AG04449 (cell line): ENCODE measurements at regions of chr11 and their contacts with region 1.

Region 1: DNA sequence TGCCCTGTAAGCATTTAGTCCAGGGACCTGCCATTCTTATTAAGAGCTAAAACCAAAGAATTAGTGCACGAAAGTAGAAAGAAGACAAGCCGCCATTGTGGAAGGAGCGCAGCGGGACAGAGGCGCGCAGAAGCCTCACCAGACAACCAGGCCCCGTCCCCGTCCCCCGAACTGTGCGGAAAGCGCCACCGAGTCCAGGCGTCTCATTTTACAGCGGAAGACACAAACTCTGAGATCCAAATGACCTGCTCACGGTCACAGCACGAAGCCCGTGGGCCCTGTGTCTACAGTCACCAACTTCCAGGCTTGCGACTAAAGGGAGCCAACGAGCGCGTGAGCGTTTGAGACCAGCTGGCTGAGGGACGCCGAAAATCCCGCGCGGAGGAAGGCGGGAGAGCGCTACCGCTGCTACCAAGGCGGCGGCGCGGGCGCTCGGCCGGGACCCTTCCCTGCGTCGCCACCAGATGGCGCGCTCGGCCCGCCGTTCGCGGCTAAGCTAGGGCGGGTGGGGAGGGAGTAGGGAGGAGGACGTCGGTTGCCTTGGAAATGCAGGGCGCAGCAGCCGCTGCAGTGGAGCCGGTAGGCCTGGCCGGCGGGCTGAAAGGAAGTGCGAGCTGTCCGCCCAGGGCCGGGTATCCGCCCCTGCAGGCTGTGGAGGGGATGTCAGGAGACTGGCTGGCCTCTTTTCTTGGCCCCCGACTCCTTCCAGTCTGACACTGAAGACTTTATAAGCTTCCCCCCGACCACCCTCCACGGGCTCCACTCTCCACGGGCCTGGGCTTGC is 434 bp upstream of the CCDC83 start:
- DNase-seq: no peak
- H3K4me3 ChIP-seq: peak overlapping the region; percentile 70
- CTCF ChIP-seq: peak; percentile 72

Region 2: GRCh38 chr11:85472953-85473352 is 381.8 kb before region 1 on chr11:
- CTCF ChIA-PET with region 1: no interaction called
- POLR2A ChIA-PET with region 1: no interaction called
- DNase-seq: no peak
- H3K4me3 ChIP-seq: no peak overlapping the region
- CTCF ChIP-seq: no peak

Region 3: DNA sequence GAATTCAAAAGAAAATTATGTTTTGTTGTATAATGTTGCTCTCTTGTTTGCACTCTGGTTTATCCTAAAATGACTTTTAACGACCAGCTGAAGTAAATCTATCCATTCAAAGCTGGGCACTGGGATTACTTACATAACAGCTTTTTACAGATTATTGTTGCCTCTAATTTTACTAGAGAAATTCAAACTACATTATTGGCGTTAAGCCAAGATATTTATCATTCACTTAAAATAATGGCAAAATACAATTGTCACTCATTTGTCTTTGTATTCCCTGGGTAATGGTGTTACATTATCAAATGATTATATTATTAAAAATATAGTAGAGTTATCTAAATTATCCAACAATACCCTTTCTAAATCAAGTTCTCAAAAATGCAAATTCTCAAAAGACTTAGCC is 257.9 kb before region 1 on chr11:
- CTCF ChIA-PET with region 1: interaction called, 10 read pairs
- POLR2A ChIA-PET with region 1: no interaction called
- DNase-seq: no peak
- H3K4me3 ChIP-seq: no peak overlapping the region
- CTCF ChIP-seq: no peak

Region 4: GRCh38 chr11:85826116-85826855 is 28.5 kb before region 1 on chr11:
- CTCF ChIA-PET with region 1: interaction called, 11 read pairs
- POLR2A ChIA-PET with region 1: no interaction called
- DNase-seq: no peak
- H3K4me3 ChIP-seq: no peak overlapping the region
- CTCF ChIP-seq: peak; percentile 80

Region 5: DNA sequence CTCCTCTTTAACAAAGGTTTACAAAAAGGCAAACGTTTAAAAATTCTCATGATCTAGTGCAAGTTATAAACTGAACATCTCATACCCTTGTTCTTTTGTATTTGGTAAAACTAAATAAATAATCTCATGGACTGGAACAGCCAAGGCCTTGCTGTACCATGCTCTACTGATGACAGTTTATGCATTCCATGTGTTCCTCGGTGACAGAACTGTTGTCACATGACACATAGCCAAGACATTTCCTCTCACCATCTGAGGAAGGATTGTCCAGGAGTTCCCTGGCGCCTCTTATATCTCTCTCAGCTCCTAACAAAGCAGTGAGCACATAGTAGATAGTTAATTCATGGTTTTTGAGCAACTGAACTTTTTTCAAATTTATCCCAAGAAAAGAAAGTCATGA is 13.0 kb after region 1 on chr11:
- CTCF ChIA-PET with region 1: interaction called, 73 read pairs
- POLR2A ChIA-PET with region 1: no interaction called
- DNase-seq: no peak
- H3K4me3 ChIP-seq: no peak overlapping the region
- CTCF ChIP-seq: no peak

Region 6: GRCh38 chr11:86218125-86219084 is 363.7 kb after region 1 on chr11:
- CTCF ChIA-PET with region 1: interaction called, 16 read pairs
- POLR2A ChIA-PET with region 1: interaction called, 3 read pairs
- DNase-seq: no peak
- H3K4me3 ChIP-seq: peak overlapping the region; percentile 2; the same call in 1 of the 2 replicates
- CTCF ChIP-seq: peak; percentile 83

Region 7: DNA sequence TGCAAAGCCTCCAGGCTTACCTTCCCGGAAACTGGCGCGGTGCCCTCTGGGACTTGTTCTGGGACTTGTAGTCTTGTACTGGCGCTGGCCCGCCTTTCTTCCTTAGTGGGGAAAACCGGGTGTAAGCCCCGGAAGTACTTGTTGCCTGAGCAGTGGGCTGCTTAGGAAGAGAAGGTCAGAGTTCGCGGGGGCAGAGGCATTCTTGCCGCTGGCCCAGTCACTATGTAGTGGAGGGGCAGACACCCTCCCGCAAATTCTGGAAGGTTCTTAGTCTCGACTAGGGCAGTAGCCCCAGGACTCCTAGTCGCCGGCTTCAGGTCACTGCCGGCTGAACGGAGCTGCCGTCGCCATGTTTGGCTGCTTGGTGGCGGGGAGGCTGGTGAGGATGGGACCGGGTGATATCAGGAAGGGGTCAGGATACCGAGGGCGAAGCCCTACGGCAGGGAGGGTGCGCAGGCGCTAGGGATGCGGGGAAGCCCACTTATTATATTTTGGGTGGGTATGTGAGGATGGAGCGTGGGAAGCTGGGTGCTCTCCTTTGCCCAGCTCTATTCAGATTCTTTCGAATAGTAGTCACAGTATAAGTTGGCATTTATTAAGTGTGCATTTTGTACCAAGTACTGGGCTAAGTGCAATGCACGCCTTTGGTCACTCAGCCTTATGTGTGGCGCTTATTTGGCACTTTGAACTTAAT is 447.5 kb after region 1 on chr11 and contains the start of gene HIKESHI:
- CTCF ChIA-PET with region 1: interaction called, 13 read pairs
- POLR2A ChIA-PET with region 1: no interaction called
- DNase-seq: peak; percentile 88
- H3K4me3 ChIP-seq: peak within 1 kb of the TSS; percentile 86
- CTCF ChIP-seq: no peak